Endothelial cell of umbilical vein (primary cell): ENCODE measurements at regions of chr9 and their contacts with region 1.

Region 1: DNA sequence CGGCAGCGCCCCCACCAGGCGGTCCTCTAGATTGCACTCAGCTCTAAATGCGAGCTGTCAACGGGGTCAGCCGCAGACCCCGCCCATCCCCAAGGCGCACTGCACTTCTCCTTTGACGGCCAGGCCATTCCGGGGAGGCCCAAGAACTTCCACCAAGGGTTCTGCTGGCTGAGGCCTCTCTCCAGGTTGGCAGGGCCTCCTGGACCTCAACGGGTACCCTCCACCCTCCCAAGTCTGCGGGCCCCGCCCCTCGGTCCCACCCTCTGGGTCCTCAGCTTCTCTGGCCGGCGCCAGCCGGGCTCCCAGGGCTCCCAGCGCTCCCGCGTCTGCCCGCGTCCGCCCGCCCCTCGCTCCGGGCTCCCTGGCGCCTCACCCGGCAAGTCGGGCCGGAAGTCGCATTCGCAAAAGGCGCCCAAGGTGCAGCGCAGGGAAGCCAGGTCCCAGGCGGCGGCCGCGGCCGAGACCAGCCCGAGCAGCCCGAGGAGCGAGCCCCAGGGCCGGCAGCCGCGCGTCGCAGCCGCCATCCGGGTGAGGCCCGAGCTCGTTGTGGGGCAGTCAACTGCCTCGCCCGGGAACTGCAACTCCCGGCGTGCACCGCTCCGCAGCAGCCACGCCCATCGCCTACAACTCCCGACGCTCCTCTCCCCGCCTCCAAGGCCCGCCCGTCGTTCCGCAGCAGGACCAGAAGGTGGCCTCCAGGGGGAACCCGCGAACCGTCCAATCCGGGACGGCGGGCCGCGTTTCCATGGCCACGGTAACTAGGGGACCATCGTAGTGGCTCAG is at the start of gene TOR2A:
- DNase-seq: peak; percentile 98
- H3K4me3 ChIP-seq: peak within 1 kb of the TSS; percentile 23 to 73 (median 38)
- H3K27ac ChIP-seq: peak within 1 kb of the TSS; percentile 68
- H3K4me1 ChIP-seq: peaks cover 12% of the 10 kb centered on the region
- H3K27me3 ChIP-seq: no peaks in the 10 kb centered on the region
- CTCF ChIP-seq: peak; percentile 96 to 97
- POLR2A ChIP-seq: peak; percentile 68
- total RNA-seq, gene TOR2A: 17.1 and 19.3 TPM in 2 replicates

Region 2: GRCh38 chr9:127503947-127504782 is 230.8 kb before region 1 on chr9:
- CTCF ChIA-PET with region 1: interaction called, 10 read pairs
- POLR2A ChIA-PET with region 1: no interaction called
- dilution Hi-C with region 1: no loop called
- intact Hi-C with region 1: loop called (anchors 1 kb)
- DNase-seq: peak; percentile 75
- H3K4me3 ChIP-seq: no peak overlapping the region
- H3K27ac ChIP-seq: no peak overlapping the region
- H3K4me1 ChIP-seq: no peaks in the 10 kb centered on the region
- H3K27me3 ChIP-seq: no peaks in the 10 kb centered on the region
- CTCF ChIP-seq: peak; percentile 86 to 98
- POLR2A ChIP-seq: no peak

Region 3: GRCh38 chr9:127586537-127586936 is 148.4 kb before region 1 on chr9:
- CTCF ChIA-PET with region 1: interaction called, 94 read pairs
- POLR2A ChIA-PET with region 1: no interaction called
- dilution Hi-C with region 1: no loop called
- intact Hi-C with region 1: loop called (anchors 1 kb)
- DNase-seq: peak; percentile 70
- H3K4me3 ChIP-seq: no peak overlapping the region
- H3K27ac ChIP-seq: no peak overlapping the region
- H3K4me1 ChIP-seq: no peaks in the 10 kb centered on the region
- H3K27me3 ChIP-seq: no peaks in the 10 kb centered on the region
- CTCF ChIP-seq: peak; percentile 80 to 88
- POLR2A ChIP-seq: no peak

Region 4: DNA sequence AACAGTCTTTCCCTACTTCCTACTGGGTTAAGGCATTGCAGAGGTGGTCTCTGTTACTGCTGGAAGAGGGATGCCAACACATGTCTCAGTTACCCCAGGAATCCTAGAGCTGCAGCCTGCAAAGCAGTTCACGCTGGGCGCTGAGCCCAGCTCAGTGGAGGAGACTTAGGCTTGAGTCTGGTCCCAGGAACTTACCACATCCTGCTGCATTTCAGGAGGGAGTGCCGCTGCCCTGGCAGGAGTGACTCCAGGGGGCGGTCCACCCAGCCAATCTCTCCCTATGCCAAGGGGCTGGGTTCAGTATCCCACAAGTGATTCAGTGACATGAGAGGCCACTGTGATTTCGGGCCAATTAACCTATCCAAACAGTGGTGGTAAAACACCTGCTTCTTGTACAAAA is 11.5 kb before region 1 on chr9:
- CTCF ChIA-PET with region 1: interaction called, 12 read pairs
- POLR2A ChIA-PET with region 1: no interaction called
- dilution Hi-C with region 1: no loop called
- intact Hi-C with region 1: no loop called
- DNase-seq: no peak
- H3K4me3 ChIP-seq: no peak overlapping the region
- H3K27ac ChIP-seq: no peak overlapping the region
- H3K4me1 ChIP-seq: no peaks in the 10 kb centered on the region
- H3K27me3 ChIP-seq: no peaks in the 10 kb centered on the region
- CTCF ChIP-seq: no peak
- POLR2A ChIP-seq: no peak

Region 5: DNA sequence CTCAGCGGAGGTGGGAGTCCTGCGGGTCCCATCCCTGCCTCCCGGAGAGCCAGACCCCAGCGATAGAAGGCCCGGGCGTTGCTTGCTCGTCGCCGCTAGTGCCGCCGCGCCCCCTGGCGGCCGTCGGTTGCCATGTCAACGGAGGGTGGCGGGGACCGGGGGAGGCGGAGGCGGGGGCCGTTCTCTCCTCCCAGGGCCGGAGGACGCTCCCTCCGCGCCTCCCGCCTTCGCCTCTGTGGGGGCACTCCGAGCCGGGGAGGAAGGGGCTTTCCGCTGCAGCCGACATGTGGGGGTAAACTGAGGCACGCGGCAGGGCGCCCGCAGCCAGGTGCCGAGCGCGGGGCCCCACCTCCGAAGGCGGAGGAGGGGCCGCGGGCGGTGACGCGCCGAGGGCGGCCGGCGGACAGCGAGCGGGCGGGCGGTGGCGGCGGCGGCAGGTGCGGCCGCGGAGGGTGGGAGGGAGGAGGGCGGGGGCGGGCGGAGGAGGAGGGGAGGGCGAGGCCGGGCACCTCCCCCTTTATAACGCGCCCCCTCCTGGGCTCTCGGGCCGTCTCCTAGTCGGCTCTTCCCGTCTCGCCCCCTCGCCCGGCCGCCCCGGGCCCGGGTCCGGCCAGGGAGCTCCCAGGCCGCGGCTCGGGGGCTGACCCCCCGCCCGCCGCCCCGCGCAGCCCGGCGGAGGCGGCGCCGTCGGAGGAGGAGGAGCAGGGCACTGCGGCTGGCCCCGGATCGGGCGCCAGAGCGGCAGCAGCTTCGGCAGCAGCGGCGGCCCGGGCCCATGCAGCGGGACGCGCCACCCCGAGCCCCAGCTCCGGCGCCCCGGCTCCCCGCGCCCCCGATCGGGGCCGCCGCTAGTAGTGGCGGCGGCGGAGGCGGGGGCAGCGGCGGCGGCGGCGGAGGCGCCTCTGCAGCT is 50.3 kb after region 1 on chr9:
- CTCF ChIA-PET with region 1: interaction called, 46 read pairs
- POLR2A ChIA-PET with region 1: interaction called, 4 read pairs
- dilution Hi-C with region 1: no loop called
- intact Hi-C with region 1: loop called (anchors 1 kb)
- DNase-seq: peak; percentile 89
- H3K4me3 ChIP-seq: peak overlapping the region in 1 of 3 experiments; percentile 89
- H3K27ac ChIP-seq: peak overlapping the region; percentile 69
- H3K4me1 ChIP-seq: peaks cover 44% of the 10 kb centered on the region
- H3K27me3 ChIP-seq: no peaks in the 10 kb centered on the region
- CTCF ChIP-seq: peak; percentile 64 to 88
- POLR2A ChIP-seq: peak; percentile 24

Region 6: GRCh38 chr9:127916665-127917613 is 182.0 kb after region 1 on chr9 and contains the start of gene ST6GALNAC4:
- CTCF ChIA-PET with region 1: interaction called, 21 read pairs
- POLR2A ChIA-PET with region 1: interaction called, 3 read pairs
- dilution Hi-C with region 1: no loop called
- intact Hi-C with region 1: loop called (anchors 1 kb)
- DNase-seq: peak; percentile 89
- H3K4me3 ChIP-seq: peak within 1 kb of the TSS; percentile 59 to 77 (median 71)
- H3K27ac ChIP-seq: peak within 1 kb of the TSS; percentile 55
- H3K4me1 ChIP-seq: peaks cover 39% of the 10 kb centered on the region
- H3K27me3 ChIP-seq: no peaks in the 10 kb centered on the region
- CTCF ChIP-seq: no peak
- POLR2A ChIP-seq: peak; percentile 82
- total RNA-seq, gene ST6GALNAC4: 38.1 and 45.9 TPM in 2 replicates

Region 7: DNA sequence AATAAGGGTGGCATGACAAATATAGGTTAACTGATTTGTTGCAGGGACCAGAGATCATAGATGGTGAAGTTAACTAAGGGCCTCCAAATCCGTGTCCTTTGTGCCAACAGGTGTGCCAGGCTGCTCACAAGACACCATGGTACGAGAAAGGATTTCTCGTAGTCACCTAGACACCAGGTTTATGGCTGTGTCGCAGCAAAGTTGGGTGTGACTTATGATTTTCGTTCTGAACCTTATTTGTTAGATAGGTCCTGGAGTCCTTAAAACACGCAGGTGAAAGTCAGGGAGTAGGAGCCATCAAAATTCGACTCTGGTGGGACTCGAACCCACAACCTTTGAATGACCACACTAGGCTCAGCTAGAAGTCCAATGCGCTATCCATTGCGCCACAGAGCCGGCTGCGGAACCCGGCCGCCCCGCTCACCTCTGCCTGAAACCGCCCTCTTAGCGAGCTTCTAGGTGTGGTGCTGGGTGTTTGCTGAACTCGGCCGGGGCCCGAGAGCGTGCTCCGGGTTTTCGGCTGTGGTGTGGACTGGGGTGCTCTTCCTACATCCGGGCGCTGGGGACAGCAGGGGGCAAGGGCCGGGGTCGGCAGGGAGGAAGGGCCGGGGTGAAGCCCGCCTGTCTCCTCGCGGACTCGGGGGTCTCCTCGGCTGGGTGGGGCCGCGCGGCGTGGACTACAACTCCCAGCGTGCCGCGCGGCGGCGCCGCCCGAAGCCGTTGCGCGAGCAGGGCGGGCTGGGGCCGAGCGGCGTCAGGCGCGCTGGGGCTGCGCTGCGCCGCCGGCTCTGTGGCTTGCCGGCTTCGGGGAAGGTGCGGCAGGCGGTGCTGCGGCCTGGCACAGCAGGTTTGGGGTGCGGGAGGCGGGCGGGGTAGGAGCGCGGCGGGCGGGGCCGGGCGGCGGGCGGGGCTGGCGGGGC is 605.1 kb after region 1 on chr9 and contains the start of gene SLC27A4:
- CTCF ChIA-PET with region 1: no interaction called
- POLR2A ChIA-PET with region 1: no interaction called
- dilution Hi-C with region 1: no loop called
- intact Hi-C with region 1: no loop called
- DNase-seq: peak; percentile 68
- H3K4me3 ChIP-seq: peak within 1 kb of the TSS; percentile 57 to 79 (median 78)
- H3K27ac ChIP-seq: no peak within 1 kb of the TSS
- H3K4me1 ChIP-seq: peaks cover 7% of the 10 kb centered on the region
- H3K27me3 ChIP-seq: no peaks in the 10 kb centered on the region
- CTCF ChIP-seq: no peak
- POLR2A ChIP-seq: peak; percentile 75
- total RNA-seq, gene SLC27A4: 35.0 and 36.9 TPM in 2 replicates